ENCODE measurements at regions of chr1 and their contacts with region 1.

Region 1: DNA sequence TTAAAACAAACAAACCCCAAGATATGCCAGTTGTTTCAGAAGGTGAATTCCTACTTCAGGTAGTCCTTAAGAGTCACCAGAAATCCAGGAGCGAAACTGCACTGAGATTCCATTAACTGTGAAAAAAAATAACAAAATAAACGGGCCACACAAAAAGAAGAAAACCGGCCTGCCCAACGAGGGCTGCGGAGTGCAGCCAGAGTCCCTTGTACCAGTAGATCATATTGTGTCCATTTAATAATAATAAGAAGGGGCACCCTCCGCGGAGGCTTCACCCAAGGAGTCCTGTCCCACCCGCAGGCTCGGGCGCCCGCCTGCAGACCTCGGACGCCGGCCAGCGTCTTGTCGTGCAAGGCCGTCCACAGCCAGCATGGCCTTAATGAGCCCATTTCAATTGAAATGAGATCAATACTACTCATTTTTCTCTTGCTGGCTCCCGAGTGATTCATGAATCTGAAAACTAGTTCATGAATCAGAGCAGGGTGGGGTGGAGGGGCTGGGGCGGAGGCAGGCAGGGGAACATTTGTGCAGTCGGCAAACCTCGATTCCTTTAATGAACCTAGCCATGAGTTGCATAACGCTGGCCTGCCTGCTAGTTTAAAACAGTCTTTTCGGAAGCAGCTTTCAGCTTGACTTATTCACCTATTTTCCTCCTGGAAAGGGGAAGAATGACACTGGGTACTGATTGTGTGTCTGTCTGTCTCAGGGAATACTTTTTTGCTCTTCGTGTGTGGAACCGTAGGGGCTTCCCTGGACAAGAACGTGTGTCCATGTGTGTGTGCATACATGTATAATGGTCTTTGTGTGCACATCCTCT is 113.1 kb upstream of the IRF2BP2 start:
- DNase-seq: peak in 4 of 5 donors; percentile 66 to 79 (median 72)
- ATAC-seq: peak; percentile 6 to 39 (median 16)
- H3K4me3 ChIP-seq: peak overlapping the region in 7 of 12 donors; percentile 5 to 37 (median 26)
- H3K27ac ChIP-seq: peak overlapping the region; percentile 93 to 99 (median 99)
- H3K4me1 ChIP-seq: peaks cover 41 to 98% (median 92%) of the 10 kb centered on the region in 12 donors
- H3K27me3 ChIP-seq: no peaks in the 10 kb centered on the region
- CTCF ChIP-seq: no peak
- POLR2A ChIP-seq: no peak

Region 2: DNA sequence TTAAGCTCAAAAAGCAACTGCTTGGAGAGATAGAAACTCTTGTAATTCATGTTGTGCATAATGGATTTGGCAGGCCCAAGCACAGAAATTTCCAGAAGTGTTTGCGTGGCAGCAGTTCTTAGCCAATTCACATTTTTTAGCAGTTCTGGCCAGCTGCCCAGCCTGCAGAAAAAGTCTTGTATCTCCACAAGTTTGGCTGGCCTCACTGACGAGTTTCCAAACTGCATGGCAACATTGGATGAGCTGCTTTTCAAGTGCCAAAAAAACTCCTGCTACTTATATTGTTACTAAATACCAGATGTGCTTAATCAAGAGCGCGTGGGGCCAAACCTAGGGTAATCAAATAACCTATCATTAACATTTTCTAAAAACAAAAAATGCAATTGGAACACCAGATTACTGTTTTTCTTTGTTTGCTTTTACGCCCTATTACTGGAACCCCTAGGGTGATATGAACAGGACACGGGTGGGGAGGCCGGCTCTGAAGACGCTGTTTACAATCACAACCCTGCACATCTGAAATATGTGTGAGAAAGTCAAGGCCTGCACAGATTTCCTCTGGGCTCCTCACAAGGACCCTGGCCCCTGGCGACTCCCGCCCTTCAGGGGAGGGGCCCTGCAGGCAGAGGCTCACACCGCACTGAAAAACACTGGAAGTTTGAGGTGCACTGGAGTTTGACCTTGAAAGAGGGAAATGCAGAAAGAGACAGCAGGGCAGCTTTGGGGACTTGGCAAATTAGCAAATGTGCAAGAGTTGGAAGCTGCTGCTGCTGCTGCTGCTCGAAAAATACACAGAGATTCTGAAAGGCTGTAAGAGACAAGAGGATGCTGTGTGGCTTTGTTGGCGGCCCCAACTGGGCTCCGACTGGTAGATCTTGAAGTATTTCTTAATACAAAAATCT is 188.9 kb before region 1 on chr1:
- intact Hi-C with region 1: loop called in 7 of 10 experiments (anchors 2 to 10 kb)
- DNase-seq: peak; percentile 93 to 97 (median 94)
- ATAC-seq: peak; percentile 7 to 19 (median 16)
- H3K4me3 ChIP-seq: peak overlapping the region in 1 of 12 donors; percentile 13
- H3K27ac ChIP-seq: peak overlapping the region; percentile 91 to 99 (median 98)
- H3K4me1 ChIP-seq: peaks cover 35 to 100% (median 98%) of the 10 kb centered on the region in 12 donors
- H3K27me3 ChIP-seq: no peaks in the 10 kb centered on the region
- CTCF ChIP-seq: no peak
- POLR2A ChIP-seq: no peak

Region 3: DNA sequence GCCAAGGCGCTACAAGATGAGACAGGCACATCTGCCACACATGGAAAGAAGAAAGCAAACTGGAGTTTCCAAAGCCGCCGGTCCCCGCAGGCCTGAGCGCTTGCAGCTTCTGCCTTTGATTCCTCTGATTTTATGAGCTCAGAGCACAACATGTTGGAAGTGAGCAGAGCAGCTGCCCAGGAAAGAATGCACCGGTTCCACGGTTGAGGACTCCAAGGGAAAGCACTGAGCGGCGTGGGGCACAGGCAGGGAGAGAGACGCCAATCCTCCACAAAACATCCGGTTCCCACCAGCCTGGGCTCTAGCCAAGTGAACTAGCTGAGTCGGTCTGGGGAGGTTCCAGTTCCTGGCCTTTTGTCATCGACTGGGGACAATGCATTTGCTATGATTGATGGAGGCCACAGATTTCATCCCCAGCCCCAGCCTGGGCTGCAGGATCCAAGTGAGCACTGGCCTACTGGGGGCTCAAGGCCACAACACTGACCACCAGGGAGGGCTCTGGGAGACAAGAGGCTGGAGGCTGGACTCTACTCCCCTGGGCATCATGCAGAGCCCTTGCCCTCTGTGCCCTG is 139.9 kb after region 1 on chr1:
- intact Hi-C with region 1: loop called in 3 of 10 experiments (anchors 5 to 10 kb)
- DNase-seq: peak; percentile 79 to 88 (median 85)
- ATAC-seq: peak; percentile 62 to 79 (median 73)
- H3K4me3 ChIP-seq: peak overlapping the region in 5 of 12 donors; percentile 1 to 27 (median 8)
- H3K27ac ChIP-seq: peak overlapping the region; percentile 63 to 82 (median 77)
- H3K4me1 ChIP-seq: peaks cover 0 to 46% (median 32%) of the 10 kb centered on the region in 12 donors
- H3K27me3 ChIP-seq: no peaks in the 10 kb centered on the region
- CTCF ChIP-seq: no peak
- POLR2A ChIP-seq: no peak

Region 4: DNA sequence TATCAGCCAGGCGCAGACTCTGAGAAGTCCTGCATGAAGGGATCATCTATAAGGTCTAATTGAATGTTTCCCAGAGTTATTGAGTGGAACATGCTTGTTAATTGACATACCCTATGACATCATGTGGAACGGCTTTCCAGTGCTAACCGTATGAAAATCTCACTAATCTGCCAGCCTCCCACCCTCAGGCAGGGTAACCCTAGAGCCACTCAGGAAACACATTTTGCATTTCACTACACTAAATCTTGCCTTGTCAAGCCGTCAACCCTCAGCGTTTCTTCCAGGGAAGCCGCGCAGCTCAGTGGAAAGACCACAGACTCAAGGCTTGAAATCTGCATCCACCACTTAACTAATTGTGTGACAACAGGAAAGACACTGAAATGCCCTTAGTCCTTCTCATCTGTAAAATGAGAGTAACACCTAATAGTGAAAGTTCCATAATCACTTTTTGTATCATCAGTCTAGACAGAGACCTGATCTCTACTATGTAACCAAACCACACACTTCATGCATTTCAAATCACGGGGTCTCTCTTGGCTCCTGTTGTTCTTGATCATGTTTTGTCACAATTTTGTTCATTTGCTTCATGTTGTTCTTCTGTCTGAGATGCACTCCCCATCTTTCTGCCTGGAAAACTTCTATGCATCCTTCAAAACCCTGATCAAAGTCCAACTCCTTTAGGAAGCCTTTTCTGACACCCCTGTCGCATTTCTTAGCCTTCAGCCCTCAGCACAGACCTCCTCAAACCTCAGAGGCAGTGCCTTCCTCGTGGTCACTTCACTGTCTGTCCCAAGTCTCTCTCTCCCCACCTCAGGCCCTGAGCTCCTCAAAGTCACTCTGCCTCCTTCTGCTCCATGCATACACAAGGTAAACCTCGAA is 159.0 kb after region 1 on chr1:
- intact Hi-C with region 1: loop called in 7 of 10 experiments (anchors 1 to 10 kb)
- DNase-seq: no peak
- ATAC-seq: no peak
- H3K4me3 ChIP-seq: no peak overlapping the region
- H3K27ac ChIP-seq: no peak overlapping the region
- H3K4me1 ChIP-seq: peaks cover 0 to 50% (median 27%) of the 10 kb centered on the region in 12 donors
- H3K27me3 ChIP-seq: no peaks in the 10 kb centered on the region
- CTCF ChIP-seq: no peak
- POLR2A ChIP-seq: no peak

Region 5: GRCh38 chr1:234918181-234918841 is 195.2 kb after region 1 on chr1:
- intact Hi-C with region 1: loop called in 8 of 10 experiments (anchors 1 to 10 kb)
- DNase-seq: peak in 4 of 5 donors; percentile 55 to 72 (median 69)
- ATAC-seq: peak; percentile 30 to 68 (median 47)
- H3K4me3 ChIP-seq: no peak overlapping the region
- H3K27ac ChIP-seq: peak overlapping the region; percentile 81 to 93 (median 87)
- H3K4me1 ChIP-seq: peaks cover 21 to 82% (median 71%) of the 10 kb centered on the region in 12 donors
- H3K27me3 ChIP-seq: no peaks in the 10 kb centered on the region
- CTCF ChIP-seq: no peak
- POLR2A ChIP-seq: no peak

Region 6: GRCh38 chr1:234978397-234979295 is 255.5 kb after region 1 on chr1:
- intact Hi-C with region 1: loop called in 2 of 10 experiments (anchors 5 to 10 kb)
- DNase-seq: peak in 4 of 5 donors; percentile 48 to 71 (median 60)
- ATAC-seq: peak; percentile 7 to 51 (median 22)
- H3K4me3 ChIP-seq: peak overlapping the region in 2 of 12 donors; percentile 15 to 55
- H3K27ac ChIP-seq: peak overlapping the region; percentile 71 to 98 (median 88)
- H3K4me1 ChIP-seq: peaks cover 15 to 91% (median 45%) of the 10 kb centered on the region in 12 donors
- H3K27me3 ChIP-seq: no peaks in the 10 kb centered on the region
- CTCF ChIP-seq: peak in 5 of 12 donors; percentile 6 to 39 (median 19)
- POLR2A ChIP-seq: no peak

Region 7: DNA sequence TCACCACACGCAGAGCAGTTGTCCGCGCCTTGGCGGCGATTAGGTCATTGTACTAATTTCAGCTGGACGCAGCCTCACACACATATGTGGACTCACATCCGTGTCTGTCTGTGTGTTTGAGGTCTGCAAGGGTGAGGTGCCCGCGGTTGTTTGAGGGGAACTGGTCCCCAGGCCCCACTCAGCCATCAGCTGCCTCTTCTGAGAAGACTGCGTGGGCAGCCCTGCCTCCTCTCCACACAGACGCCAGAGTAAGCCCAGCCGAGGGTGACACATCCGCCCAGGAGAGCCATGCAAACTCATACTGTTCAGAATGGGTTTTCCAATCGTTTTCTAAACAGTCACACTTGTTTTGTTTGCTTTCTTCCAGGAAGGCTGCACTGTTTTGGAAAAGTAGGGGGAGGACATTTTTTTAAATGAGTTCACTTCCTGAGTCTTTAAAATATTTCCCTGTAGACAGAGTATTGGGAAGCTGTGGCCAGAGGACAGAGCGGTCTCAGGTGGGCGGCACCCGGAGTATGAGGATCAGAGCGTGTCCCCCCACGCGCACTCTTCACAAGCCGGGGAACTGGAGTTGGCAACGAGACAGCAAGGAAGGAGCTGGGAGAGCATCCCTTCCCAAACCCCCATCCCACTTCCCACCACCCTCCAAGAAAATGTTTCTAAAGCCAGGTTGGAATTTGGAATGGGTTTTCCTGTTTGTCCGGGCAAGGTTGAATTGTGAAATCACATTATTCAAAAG is 352.2 kb after region 1 on chr1:
- intact Hi-C with region 1: loop called in 8 of 10 experiments (anchors 1 to 5 kb)
- DNase-seq: peak; percentile 78 to 86 (median 86)
- ATAC-seq: peak; percentile 70 to 82 (median 72)
- H3K4me3 ChIP-seq: peak overlapping the region in 10 of 12 donors; percentile 1 to 33 (median 16)
- H3K27ac ChIP-seq: peak overlapping the region; percentile 91 to 99 (median 94)
- H3K4me1 ChIP-seq: peaks cover 9 to 82% (median 67%) of the 10 kb centered on the region in 12 donors
- H3K27me3 ChIP-seq: no peaks in the 10 kb centered on the region
- CTCF ChIP-seq: no peak
- POLR2A ChIP-seq: peak in 1 of 2 donors; percentile 41

Measured in heart left ventricle (tissue), 16 donors.